ENCODE measurements at regions of chr13 and their contacts with region 1.

Region 1: DNA sequence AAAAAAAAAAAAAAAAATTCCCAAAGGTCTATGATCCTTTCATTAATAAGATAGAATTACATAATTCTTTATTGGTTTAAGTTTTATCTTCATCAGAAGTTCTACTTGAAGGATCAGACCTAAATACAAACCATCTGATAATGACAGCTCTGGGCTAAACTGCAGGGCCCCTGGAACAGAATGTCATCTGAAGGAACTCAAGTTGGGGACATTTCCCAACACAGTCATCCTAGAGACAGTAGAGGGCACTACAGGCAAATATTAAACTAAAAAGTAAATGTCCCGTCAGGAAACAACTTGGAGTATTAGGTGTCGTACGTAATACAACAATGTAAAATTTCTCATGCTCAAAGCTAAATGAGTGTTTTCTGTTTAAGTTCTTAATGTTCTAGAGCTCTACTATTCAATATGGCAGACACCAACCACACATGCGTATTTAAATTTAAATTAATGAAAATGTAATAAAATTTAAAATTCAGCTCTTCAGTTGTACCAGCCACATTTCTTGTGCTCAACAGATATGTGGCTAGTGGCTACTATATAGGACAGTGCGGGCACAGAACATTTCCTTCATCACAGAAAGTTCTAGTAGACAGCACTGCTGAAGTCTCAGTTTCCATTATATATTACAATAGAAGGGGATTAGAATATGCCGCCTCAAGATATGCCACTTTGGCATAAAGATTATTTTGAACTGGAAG is 21.8 kb upstream of the NAXD start:
- DNase-seq: peak; percentile 63
- H3K4me3 ChIP-seq: no peak overlapping the region
- H3K27ac ChIP-seq: no peak overlapping the region
- H3K4me1 ChIP-seq: no peaks in the 10 kb centered on the region
- H3K27me3 ChIP-seq: peaks cover 2 to 4% of the 10 kb centered on the region in 2 experiments
- CTCF ChIP-seq: peak; percentile 39 to 40
- POLR2A ChIP-seq: no peak

Region 2: DNA sequence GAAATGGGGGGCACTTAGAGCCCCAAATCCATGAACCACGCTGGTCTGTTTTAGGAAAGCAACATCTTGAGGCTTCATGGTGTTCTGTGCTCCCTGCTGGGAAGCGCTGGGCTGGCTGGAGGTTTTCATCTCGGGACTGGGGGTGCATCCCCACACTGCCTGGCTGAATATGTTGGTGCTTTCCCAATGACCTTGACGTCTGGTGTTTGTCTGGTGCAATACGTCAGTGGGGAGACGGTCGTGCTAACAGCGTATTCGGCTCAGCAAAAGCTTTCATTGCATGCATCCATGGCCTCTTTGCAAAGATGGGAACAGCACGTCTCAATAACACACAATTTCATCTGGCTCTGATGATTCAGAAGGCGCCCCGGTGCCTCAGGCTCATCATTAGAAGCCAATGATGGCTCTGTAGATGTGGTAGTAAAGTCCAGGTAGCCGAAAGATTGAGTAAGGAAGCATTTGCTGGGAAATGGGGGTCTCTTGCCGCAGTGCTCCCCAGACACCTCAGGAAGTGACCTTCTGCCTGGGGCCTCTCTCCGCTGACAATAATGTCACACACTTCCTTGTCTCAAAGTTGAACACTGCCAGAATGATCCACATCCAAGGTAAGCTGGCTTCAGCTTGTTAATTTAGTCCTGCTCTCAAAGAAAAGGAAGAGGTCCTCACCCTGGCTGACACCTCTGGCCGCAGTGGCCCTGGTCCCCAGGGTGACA is 217.6 kb after region 1 on chr13:
- CTCF ChIA-PET with region 1: no interaction called
- POLR2A ChIA-PET with region 1: no interaction called
- dilution Hi-C with region 1: no loop called
- intact Hi-C with region 1: no loop called
- DNase-seq: no peak
- H3K4me3 ChIP-seq: no peak overlapping the region
- H3K27ac ChIP-seq: no peak overlapping the region
- H3K4me1 ChIP-seq: no peaks in the 10 kb centered on the region
- H3K27me3 ChIP-seq: peaks cover 24 to 42% of the 10 kb centered on the region in 2 experiments
- CTCF ChIP-seq: no peak
- POLR2A ChIP-seq: no peak

Region 3: DNA sequence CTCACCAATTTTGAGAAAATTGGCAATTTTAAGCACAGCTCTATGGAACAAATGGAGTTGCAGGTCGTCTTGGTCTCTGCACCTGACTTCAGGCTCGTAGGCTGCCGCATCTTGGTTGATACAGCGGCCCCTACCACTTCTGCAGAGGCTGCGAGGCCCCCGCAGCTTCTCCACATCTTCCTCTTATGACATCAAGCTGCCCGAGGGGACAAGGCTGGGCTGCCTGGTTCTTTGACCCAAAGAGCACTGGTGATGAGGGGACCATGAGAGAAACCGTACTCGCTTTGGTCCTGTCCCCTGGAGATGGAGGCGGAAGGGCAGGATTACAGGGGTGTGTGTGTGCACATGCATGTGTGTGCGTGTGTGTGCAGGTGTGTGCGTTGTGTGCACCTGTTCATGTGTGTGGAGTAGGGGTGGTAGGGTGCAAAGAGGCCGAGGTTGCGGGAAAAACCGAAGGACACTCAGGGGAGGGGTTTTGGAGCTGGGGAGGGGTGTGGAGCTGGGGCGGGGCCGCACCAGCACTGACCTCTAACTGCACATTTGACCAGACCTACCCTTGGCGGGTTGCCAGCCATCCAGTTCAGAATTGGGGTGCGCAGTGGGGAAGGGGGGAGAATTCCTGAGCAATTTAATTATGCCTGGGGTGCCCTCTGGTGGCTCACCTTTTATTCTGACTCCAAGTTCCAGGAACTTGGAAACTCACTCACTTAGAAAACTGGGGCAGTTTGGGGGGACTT is 456.4 kb after region 1 on chr13:
- CTCF ChIA-PET with region 1: interaction called, 9 read pairs
- POLR2A ChIA-PET with region 1: no interaction called
- dilution Hi-C with region 1: no loop called
- intact Hi-C with region 1: loop called (anchors 1 kb)
- DNase-seq: peak; percentile 24
- H3K4me3 ChIP-seq: no peak overlapping the region
- H3K27ac ChIP-seq: no peak overlapping the region
- H3K4me1 ChIP-seq: no peaks in the 10 kb centered on the region
- H3K27me3 ChIP-seq: peaks cover 0 to 1% of the 10 kb centered on the region in 2 experiments
- CTCF ChIP-seq: peak in 1 of 2 donors; percentile 46
- POLR2A ChIP-seq: no peak

Measured in endothelial cell of umbilical vein (primary cell).